ENCODE measurements at regions of chr17 and their contacts with region 1.

Region 1: GRCh38 chr17:28552246-28552999 is at the start of gene UNC119:
- DNase-seq: peak; percentile 53 to 90 (median 76)
- ATAC-seq: peak; percentile 67 to 82
- H3K4me3 Mint-ChIP-seq: peak within 1 kb of the TSS; percentile 90 to 97 (median 91)
- H3K27ac Mint-ChIP-seq: peak within 1 kb of the TSS; percentile 71 to 97 (median 93)
- H3K4me1 Mint-ChIP-seq: peaks cover 43 to 62% (median 53%) of the 10 kb centered on the region in 4 donors
- H3K27me3 Mint-ChIP-seq: no peaks in the 10 kb centered on the region
- polyA plus RNA-seq, gene UNC119: 18.4 to 27.1 (median 26.6) TPM

Region 2: DNA sequence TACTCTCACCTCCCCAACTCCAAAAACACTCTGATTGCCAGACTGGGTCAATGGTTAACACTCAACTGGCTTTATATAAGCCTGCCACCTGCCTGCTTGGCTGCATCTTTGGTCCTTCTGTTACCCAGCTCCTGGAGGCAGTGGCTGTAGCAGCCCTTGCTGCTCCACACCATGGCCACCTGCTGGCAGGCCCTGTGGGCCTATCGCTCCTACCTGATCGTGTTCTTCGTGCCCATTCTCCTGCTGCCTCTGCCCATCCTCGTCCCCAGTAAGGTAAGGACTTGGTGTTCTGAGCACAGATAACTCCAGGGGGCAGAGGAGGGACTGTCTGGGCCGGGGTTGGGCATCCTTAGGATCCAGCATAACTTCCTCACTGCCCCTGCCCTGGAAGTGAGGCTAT is 78.9 kb before region 1 on chr17 and contains the start of gene SLC13A2:
- POLR2A ChIA-PET with region 1: no interaction called
- DNase-seq: no peak
- ATAC-seq: no peak
- H3K4me3 Mint-ChIP-seq: no peak within 1 kb of the TSS
- H3K27ac Mint-ChIP-seq: peak within 1 kb of the TSS in 4 of 10 donors; percentile 25 to 34 (median 27)
- H3K4me1 Mint-ChIP-seq: peaks cover 6 to 17% (median 7%) of the 10 kb centered on the region in 4 donors
- H3K27me3 Mint-ChIP-seq: peaks cover 0 to 13% (median 0%) of the 10 kb centered on the region in 5 donors
- polyA plus RNA-seq, gene SLC13A2: not detected

Region 3: DNA sequence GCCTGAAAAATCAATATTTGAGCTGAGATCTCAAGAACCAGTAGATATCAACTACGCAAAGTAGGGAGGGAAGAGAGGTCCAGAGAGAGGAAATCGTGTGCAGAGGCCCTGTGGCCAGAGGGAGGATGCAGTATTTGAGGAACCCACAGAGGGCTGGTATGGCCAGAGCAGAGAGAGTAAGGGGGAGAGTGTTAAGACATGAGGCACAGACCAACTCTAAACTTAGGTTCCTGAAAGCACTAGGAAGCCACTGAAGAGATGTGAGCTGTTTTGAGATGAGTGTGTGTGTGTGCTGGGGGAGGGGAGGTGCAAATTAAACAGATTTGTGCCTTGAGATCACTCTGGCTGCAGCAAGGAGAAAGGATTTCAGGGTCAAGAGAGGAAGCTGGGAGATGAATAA is 68.1 kb before region 1 on chr17:
- POLR2A ChIA-PET with region 1: no interaction called
- DNase-seq: peak in 1 of 10 donors; percentile 4
- ATAC-seq: no peak
- H3K4me3 Mint-ChIP-seq: no peak overlapping the region
- H3K27ac Mint-ChIP-seq: peak overlapping the region in 1 of 10 donors; percentile 59
- H3K4me1 Mint-ChIP-seq: no peaks in the 10 kb centered on the region
- H3K27me3 Mint-ChIP-seq: peaks cover 0 to 8% (median 1%) of the 10 kb centered on the region in 5 donors

Region 4: GRCh38 chr17:28571255-28572122 is 19.1 kb after region 1 on chr17 and contains the start of gene PIGS:
- POLR2A ChIA-PET with region 1: interaction called, 81 read pairs
- DNase-seq: peak; percentile 80 to 94 (median 85)
- ATAC-seq: peak; percentile 96 to 97
- H3K4me3 Mint-ChIP-seq: peak within 1 kb of the TSS; percentile 91 to 98 (median 95)
- H3K27ac Mint-ChIP-seq: peak within 1 kb of the TSS; percentile 88 to 98 (median 96)
- H3K4me1 Mint-ChIP-seq: peaks cover 41 to 72% (median 64%) of the 10 kb centered on the region in 4 donors
- H3K27me3 Mint-ChIP-seq: no peaks in the 10 kb centered on the region
- polyA plus RNA-seq, gene PIGS: 36.7 to 48.1 (median 42.0) TPM